K562 (cell line): ENCODE measurements at regions of chr1 and their contacts with region 1.

Region 1: GRCh38 chr1:20493839-20494608 is 8.0 kb upstream of the CAMK2N1 start:
- DNase-seq: peak; percentile 88 to 90 (median 90)
- ATAC-seq: peak; percentile 90
- H3K4me3 ChIP-seq: no peak overlapping the region
- H3K27ac ChIP-seq: no peak overlapping the region
- H3K4me1 ChIP-seq: peaks cover 0 to 3% of the 10 kb centered on the region in 2 experiments; a peak in 2 of 5 replicates
- H3K27me3 ChIP-seq: peaks cover 10 to 30% of the 10 kb centered on the region in 2 experiments; a peak in 4 of 5 replicates
- CTCF ChIP-seq: peak; percentile 96 to 99 (median 99)
- EP300 ChIP-seq: no peak
- POLR2A ChIP-seq: no peak
- RAD21 ChIP-seq: peak; percentile 99

Region 2: GRCh38 chr1:19918057-19918456 is 576.0 kb before region 1 on chr1:
- CTCF ChIA-PET with region 1: interaction called, 19 read pairs
- POLR2A ChIA-PET with region 1: no interaction called
- in situ Hi-C with region 1: no loop called
- intact Hi-C with region 1: loop called (anchors 5 kb)
- DNase-seq: peak; percentile 85 to 90 (median 86)
- ATAC-seq: peak; percentile 89
- H3K4me3 ChIP-seq: no peak overlapping the region
- H3K27ac ChIP-seq: no peak overlapping the region
- H3K4me1 ChIP-seq: peaks cover 0 to 6% of the 10 kb centered on the region in 2 experiments; a peak in 2 of 5 replicates
- H3K27me3 ChIP-seq: peaks cover 9 to 32% of the 10 kb centered on the region in 2 experiments; a peak in 4 of 5 replicates
- CTCF ChIP-seq: peak; percentile 94 to 97 (median 95)
- EP300 ChIP-seq: no peak
- POLR2A ChIP-seq: no peak
- RAD21 ChIP-seq: peak; percentile 94 to 98

Region 3: GRCh38 chr1:20100632-20101355 is 393.2 kb before region 1 on chr1:
- CTCF ChIA-PET with region 1: interaction called, 12 read pairs
- POLR2A ChIA-PET with region 1: no interaction called
- in situ Hi-C with region 1: loop called (anchors 5 kb)
- intact Hi-C with region 1: loop called (anchors 5 kb)
- DNase-seq: peak; percentile 43 to 64 (median 54)
- ATAC-seq: peak; percentile 96
- H3K4me3 ChIP-seq: no peak overlapping the region
- H3K27ac ChIP-seq: no peak overlapping the region
- H3K4me1 ChIP-seq: no peaks in the 10 kb centered on the region
- H3K27me3 ChIP-seq: peaks cover 3 to 15% of the 10 kb centered on the region in 2 experiments; a peak in 4 of 5 replicates
- CTCF ChIP-seq: peak; percentile 73 to 84 (median 80)
- EP300 ChIP-seq: no peak
- POLR2A ChIP-seq: no peak
- RAD21 ChIP-seq: peak; percentile 88 to 93

Region 4: GRCh38 chr1:20212685-20213331 is 281.2 kb before region 1 on chr1:
- CTCF ChIA-PET with region 1: interaction called, 8 read pairs
- POLR2A ChIA-PET with region 1: no interaction called
- in situ Hi-C with region 1: loop called (anchors 10 kb)
- intact Hi-C with region 1: loop called (anchors 2 kb)
- DNase-seq: peak; percentile 75 to 79 (median 77)
- ATAC-seq: peak; percentile 87
- H3K4me3 ChIP-seq: no peak overlapping the region
- H3K27ac ChIP-seq: no peak overlapping the region; the same call in 2 of the 3 replicates
- H3K4me1 ChIP-seq: peaks cover 21 to 23% of the 10 kb centered on the region in 2 experiments
- H3K27me3 ChIP-seq: peaks cover 0 to 14% of the 10 kb centered on the region in 2 experiments; a peak in 3 of 5 replicates
- CTCF ChIP-seq: peak; percentile 86 to 93 (median 90)
- EP300 ChIP-seq: no peak
- POLR2A ChIP-seq: no peak
- RAD21 ChIP-seq: peak; percentile 59 to 64

Region 5: GRCh38 chr1:20371411-20371810 is 122.6 kb before region 1 on chr1:
- CTCF ChIA-PET with region 1: interaction called, 23 read pairs
- POLR2A ChIA-PET with region 1: no interaction called
- in situ Hi-C with region 1: loop called (anchors 5 kb)
- intact Hi-C with region 1: loop called (anchors 2 kb)
- DNase-seq: peak in 1 of 4 experiments; percentile 14
- ATAC-seq: no peak
- H3K4me3 ChIP-seq: no peak overlapping the region
- H3K27ac ChIP-seq: no peak overlapping the region
- H3K4me1 ChIP-seq: peaks cover 0 to 4% of the 10 kb centered on the region in 2 experiments; a peak in 1 of 5 replicates
- H3K27me3 ChIP-seq: peaks cover 13 to 30% of the 10 kb centered on the region in 2 experiments
- CTCF ChIP-seq: no peak
- EP300 ChIP-seq: no peak
- POLR2A ChIP-seq: no peak
- RAD21 ChIP-seq: no peak

Region 6: DNA sequence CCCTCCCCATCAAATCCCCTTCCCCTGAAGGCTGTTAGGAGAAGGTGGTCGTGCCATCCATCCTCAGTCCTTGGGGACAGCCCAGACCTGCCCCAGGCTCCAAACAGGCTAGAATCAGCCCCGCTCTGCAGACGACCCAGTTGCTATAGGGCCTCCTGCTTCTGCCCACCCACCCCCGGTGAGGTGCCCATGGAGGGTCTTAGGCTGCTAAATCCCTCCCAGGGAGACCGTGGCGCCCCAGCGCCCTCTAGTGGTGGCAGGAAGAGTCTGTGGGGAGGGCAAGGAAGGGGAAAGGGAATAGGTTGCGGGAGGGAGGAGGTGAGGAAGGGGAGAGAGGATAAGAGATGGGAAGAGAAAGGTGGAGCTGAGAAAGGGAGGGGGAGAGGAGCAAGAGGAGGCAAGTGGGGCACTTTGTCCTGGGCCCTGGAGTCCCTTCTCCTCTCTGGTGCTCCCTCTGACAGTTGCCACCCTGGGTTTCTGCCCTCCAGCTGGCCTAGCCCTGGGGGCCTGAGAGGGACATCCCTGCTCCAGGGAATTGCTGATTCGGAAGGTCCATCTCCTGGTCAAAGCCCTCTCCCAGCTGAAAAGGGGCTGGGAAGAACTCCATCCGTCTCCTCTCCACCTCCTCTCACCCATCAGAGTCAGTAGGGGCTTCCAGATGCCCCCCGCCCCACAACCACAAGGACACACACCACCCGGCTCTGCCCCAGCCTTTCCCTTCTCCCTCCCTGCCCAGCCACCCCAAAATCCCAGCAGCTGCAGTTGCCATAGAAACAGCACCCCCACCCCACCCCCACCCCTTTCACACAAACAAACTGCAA is 63.5 kb before region 1 on chr1:
- CTCF ChIA-PET with region 1: interaction called, 23 read pairs
- POLR2A ChIA-PET with region 1: no interaction called
- in situ Hi-C with region 1: no loop called
- intact Hi-C with region 1: no loop called
- DNase-seq: peak; percentile 71 to 81 (median 77)
- ATAC-seq: peak; percentile 94
- H3K4me3 ChIP-seq: no peak overlapping the region
- H3K27ac ChIP-seq: no peak overlapping the region
- H3K4me1 ChIP-seq: no peaks in the 10 kb centered on the region
- H3K27me3 ChIP-seq: peaks cover 16 to 58% of the 10 kb centered on the region in 2 experiments
- CTCF ChIP-seq: peak; percentile 85 to 90 (median 87)
- EP300 ChIP-seq: no peak
- POLR2A ChIP-seq: no peak
- RAD21 ChIP-seq: peak; percentile 59 to 84